ENCODE measurements at regions of chr7 and their contacts with region 1.

Region 1: GRCh38 chr7:43135129-43135528 is 22.7 kb downstream of the HECW1 start:
- DNase-seq: no peak

Region 2: DNA sequence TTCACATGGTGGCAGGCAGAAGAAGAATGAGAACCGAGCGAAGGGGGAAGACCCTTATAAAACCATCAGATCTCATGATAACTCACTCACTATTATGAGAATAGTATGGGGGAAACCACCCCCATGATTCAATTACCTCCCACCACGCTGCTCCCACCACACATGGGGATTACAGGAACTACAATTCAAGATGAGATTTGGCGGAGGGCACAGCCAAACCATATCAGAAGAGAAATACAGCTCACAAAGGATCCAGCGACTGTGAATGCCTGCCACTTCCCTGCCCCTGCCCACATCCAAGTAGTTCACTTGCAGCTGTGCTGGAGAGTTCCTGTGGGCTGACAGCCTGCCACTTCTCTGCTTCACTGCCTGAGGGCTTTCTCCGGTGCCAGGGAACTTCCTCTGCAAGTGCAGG is 372.0 kb before region 1 on chr7:
- CTCF ChIA-PET with region 1: no interaction called
- POLR2A ChIA-PET with region 1: no interaction called
- DNase-seq: no peak

Region 3: GRCh38 chr7:43244232-43244631 is 109.1 kb after region 1 on chr7:
- CTCF ChIA-PET with region 1: interaction called, 10 read pairs
- POLR2A ChIA-PET with region 1: no interaction called
- DNase-seq: no peak

Measured in HEK293T (cell line).